Activated naive CD4-positive, alpha-beta T cell treated with anti-CD3 and anti-CD28 coated beads for 36 hours (primary cell): ENCODE measurements at regions of chr13 and their contacts with region 1.

Region 1: DNA sequence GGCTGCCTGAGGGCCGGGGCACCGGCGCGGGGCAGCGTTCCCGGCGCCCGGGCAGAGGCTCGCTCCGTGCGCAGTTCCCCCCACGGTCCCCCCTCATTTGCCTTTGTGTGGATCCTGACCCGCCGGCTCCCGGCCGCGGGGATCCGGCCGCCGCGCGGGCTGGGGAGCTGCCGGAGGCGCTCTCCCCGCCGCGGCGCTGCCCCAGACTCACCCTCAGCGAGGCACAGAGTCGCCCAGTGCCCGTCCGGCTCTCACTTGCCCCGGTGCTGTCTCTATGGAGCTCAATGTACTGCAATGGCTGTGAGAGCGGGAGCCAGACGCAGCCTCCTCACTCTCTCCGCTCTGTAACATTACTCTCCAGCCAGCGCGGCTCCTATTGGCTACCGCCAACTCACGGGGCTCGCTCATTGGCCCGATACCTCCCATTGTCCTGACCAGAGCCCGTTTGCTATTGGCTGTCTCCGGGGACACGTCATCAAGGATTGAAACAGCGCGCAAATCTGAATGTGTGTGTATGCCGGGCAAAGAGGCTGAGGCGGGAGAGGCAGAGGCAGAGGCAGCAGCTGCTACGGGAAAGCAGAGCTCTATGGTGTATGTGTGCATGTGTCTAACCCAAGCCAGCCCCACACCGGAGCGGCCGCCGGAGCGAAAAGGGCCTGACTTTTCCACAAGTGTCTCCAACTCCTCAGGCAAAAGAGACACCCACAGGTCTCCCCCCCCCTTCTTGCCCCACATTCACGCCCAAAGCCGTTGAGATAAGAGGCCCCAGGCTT is at the start of gene HMGB1:
- DNase-seq: peak; percentile 99
- H3K4me3 Mint-ChIP-seq: peak within 1 kb of the TSS; percentile 89
- H3K27ac Mint-ChIP-seq: peak within 1 kb of the TSS; percentile 98
- H3K4me1 Mint-ChIP-seq: peaks cover 15% of the 10 kb centered on the region
- H3K27me3 Mint-ChIP-seq: peaks cover 3% of the 10 kb centered on the region
- total RNA-seq, gene HMGB1: 686 to 722 TPM

Region 2: GRCh38 chr13:29935309-29935981 is 530.3 kb before region 1 on chr13:
- CTCF ChIA-PET with region 1: no interaction called
- intact Hi-C with region 1: loop called (anchors 1 kb)
- DNase-seq: peak; percentile 94
- H3K4me3 Mint-ChIP-seq: peak overlapping the region; percentile 67
- H3K27ac Mint-ChIP-seq: peak overlapping the region; percentile 83
- H3K4me1 Mint-ChIP-seq: peaks cover 39% of the 10 kb centered on the region
- H3K27me3 Mint-ChIP-seq: no peaks in the 10 kb centered on the region

Region 3: GRCh38 chr13:30165796-30166195 is 300.0 kb before region 1 on chr13:
- CTCF ChIA-PET with region 1: no interaction called
- intact Hi-C with region 1: no loop called
- DNase-seq: no peak
- H3K4me3 Mint-ChIP-seq: no peak overlapping the region
- H3K27ac Mint-ChIP-seq: no peak overlapping the region
- H3K4me1 Mint-ChIP-seq: peaks cover 11% of the 10 kb centered on the region
- H3K27me3 Mint-ChIP-seq: no peaks in the 10 kb centered on the region

Region 4: GRCh38 chr13:30306762-30307193 is 159.0 kb before region 1 on chr13:
- CTCF ChIA-PET with region 1: no interaction called
- intact Hi-C with region 1: loop called (anchors 1 kb)
- DNase-seq: peak; percentile 94
- H3K4me3 Mint-ChIP-seq: peak overlapping the region; percentile 83
- H3K27ac Mint-ChIP-seq: peak overlapping the region; percentile 76
- H3K4me1 Mint-ChIP-seq: peaks cover 14% of the 10 kb centered on the region
- H3K27me3 Mint-ChIP-seq: no peaks in the 10 kb centered on the region

Region 5: DNA sequence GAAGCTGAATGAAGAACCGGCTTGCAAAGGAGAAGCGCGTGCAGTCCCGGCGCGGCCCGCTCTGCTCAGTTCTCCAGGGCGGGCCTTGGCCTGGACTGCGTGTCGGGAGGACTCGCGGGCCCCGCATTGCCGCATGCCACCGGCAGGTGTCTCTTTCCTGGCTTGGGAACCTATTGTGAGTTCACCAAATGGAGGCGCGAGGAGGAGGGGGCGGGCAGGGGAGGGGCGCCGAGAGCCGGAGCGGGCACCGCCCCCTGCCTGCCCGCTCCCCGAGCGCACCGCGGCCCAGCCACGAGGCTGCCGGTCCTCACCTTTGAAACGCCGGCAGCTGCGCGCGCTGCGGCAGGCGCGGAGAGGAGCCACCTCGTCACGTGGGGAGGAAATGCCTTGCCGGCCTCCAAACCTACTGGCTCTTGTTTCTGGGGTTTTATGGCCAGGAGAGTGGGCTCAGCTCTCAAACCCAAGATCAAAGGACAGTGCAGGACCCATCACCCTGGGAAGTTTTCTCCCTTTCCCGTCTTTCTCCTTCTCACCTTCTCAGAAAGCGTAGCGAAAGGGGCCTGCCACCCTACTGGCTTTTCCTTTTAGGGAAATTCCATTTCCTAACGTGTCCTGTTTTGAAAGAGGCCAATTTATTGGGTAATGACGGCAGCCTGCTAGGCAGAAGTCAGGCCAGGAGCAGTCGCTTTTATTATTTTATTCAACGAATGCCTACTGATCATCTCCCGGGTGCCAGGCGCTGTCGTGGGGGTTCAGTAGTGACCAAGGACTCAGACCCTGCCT is 57.3 kb before region 1 on chr13:
- CTCF ChIA-PET with region 1: no interaction called
- intact Hi-C with region 1: loop called (anchors 1 kb)
- DNase-seq: peak; percentile 96
- H3K4me3 Mint-ChIP-seq: peak overlapping the region; percentile 49
- H3K27ac Mint-ChIP-seq: no peak overlapping the region
- H3K4me1 Mint-ChIP-seq: peaks cover 10% of the 10 kb centered on the region
- H3K27me3 Mint-ChIP-seq: no peaks in the 10 kb centered on the region

Region 6: DNA sequence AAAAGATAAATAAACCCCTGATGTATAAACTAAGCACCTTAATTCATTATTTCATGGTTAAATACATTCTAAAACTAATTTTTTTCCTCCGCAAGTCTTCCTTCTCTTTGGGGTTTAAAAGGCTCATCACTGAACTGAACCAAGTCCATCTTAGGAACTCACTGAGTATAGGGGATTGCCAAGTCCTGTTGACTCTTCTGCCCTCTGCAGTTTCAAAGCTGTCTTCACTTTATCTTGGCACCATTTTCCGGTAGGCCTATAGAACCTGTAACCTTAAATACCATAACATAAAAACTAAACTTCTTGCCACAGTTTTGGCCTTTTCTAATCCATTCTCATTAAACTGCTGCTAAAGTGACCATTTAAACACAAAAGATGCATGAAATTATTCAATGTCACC is 85.4 kb after region 1 on chr13:
- CTCF ChIA-PET with region 1: interaction called, 3 read pairs
- intact Hi-C with region 1: loop called (anchors 2 kb)
- DNase-seq: peak; percentile 30
- H3K4me3 Mint-ChIP-seq: no peak overlapping the region
- H3K27ac Mint-ChIP-seq: no peak overlapping the region
- H3K4me1 Mint-ChIP-seq: peaks cover 2% of the 10 kb centered on the region
- H3K27me3 Mint-ChIP-seq: no peaks in the 10 kb centered on the region

Region 7: DNA sequence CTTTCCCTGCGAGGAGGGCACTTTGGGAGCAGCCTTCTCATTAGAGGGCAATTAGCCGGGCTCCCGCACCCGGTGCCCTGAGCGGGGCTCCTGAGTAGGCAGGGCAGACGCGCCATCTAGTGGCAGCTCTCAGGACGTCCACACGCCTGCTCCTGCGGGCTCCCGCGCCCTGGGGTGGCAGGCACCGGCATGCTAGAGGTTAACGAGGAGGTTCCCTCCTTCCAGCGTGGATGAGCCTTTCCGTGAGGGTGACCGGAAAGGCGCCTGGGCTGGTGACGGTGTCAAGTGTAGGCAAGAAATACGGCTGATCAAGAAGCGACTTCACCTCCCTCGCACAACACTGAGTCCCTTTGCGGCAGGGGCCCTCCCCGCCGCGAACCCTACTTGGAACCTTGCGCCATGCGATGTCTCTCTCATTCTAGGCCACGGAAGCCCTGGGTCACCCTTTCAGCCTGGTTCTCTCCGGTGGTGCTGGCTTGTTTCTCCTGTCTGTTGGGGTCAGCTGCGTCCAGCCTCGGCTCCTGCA is 337.2 kb after region 1 on chr13:
- CTCF ChIA-PET with region 1: no interaction called
- intact Hi-C with region 1: loop called (anchors 2 kb)
- DNase-seq: peak; percentile 88
- H3K4me3 Mint-ChIP-seq: peak overlapping the region; percentile 38
- H3K27ac Mint-ChIP-seq: no peak overlapping the region
- H3K4me1 Mint-ChIP-seq: peaks cover 5% of the 10 kb centered on the region
- H3K27me3 Mint-ChIP-seq: no peaks in the 10 kb centered on the region